Thyroid gland (tissue), 4 donors: ENCODE measurements at regions of chr17 and their contacts with region 1.

Region 1: GRCh38 chr17:47229535-47230443 is 20.6 kb downstream of the MYL4 start:
- DNase-seq: peak; percentile 94
- H3K4me3 ChIP-seq: no peak overlapping the region
- H3K27ac ChIP-seq: peak overlapping the region; percentile 84 to 97 (median 93)
- H3K4me1 ChIP-seq: peaks cover 40 to 54% of the 10 kb centered on the region in 2 donors
- H3K27me3 ChIP-seq: no peaks in the 10 kb centered on the region
- CTCF ChIP-seq: peak; percentile 95 to 99 (median 99)
- POLR2A ChIP-seq: peak in 1 of 2 donors; percentile 63

Region 2: DNA sequence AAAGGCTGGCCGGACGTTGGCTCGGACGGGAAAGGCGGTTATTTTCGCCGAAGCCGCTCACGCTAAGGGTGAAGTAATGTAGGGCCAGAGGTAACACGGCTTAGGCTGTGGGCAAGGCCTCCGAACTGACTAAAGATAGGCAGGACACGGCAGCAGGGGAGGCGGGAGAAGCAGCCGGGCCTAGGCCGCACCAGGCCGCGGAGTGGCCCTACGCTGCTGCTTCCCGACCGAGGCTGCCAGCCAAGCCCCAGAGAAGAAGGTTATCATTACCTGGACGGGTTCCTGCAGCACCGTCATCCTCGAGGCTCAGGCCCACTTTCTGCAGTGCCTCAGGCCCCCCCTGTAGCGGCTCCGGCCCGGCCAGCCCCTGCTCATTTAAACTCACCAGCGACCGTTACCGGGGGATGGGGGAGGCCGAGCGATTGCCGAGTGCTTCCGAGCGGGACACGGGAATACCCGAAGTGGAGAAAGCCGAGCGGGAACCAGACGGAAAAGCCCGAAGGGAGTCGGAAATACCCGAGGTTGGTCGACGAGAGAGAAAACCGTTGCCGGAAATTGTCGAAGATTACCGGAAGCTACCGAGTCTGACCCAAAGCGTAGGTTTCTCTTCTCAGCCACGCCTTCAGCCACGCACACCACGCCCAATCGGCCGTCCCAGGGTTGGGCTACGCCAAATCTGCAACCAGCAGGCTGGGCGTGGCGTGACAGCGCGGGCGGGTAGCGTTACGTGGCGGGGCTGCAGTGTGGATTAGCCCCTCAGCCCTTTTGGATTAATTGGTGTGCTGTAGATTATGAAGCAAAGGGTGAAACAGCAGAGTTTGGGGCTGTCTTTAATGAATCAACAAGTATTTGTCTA is 40.7 kb before region 1 on chr17 and contains the start of gene CDC27:
- intact Hi-C with region 1: no loop called
- DNase-seq: peak; percentile 99
- H3K4me3 ChIP-seq: peak within 1 kb of the TSS; percentile 50 to 89 (median 72)
- H3K27ac ChIP-seq: peak within 1 kb of the TSS; percentile 94 to 98 (median 96)
- H3K4me1 ChIP-seq: peaks cover 33 to 38% of the 10 kb centered on the region in 2 donors
- H3K27me3 ChIP-seq: no peaks in the 10 kb centered on the region
- CTCF ChIP-seq: no peak
- POLR2A ChIP-seq: peak; percentile 75 to 88
- total RNA-seq, gene CDC27: 124 to 195 (median 181) TPM

Region 3: DNA sequence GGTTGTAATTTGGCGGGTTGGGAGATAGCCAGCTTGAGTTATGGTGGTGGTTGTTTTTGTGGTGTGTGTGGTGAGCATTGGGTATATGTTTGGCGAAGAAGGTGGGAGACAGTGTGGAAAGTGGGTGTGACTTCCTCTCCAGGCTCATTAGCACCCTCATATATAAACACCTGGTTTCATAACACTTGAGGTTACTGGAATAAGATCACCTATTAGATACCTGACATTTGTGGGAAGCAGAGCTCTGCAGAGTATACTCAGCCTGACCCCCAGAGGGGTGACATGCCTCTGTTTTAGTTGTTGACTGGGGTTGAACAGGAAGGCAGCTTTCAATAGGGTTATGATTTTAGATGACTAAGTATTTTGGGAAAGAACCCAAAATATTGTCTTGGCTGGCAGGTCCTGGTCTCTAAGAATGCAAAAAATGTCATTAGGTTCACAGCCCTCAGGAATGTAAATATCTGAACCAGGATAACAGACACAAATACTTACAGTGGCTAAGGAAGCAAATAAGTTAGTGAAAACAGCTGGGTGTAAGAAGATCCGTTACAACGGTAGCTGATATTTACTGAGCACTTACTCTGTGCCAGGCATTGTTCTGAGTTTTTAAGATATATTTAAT is 75.6 kb after region 1 on chr17:
- intact Hi-C with region 1: no loop called
- DNase-seq: peak in 1 of 2 donors; percentile 47
- H3K4me3 ChIP-seq: no peak overlapping the region
- H3K27ac ChIP-seq: peak overlapping the region; percentile 78 to 93 (median 85)
- H3K4me1 ChIP-seq: peaks cover 14 to 31% of the 10 kb centered on the region in 2 donors
- H3K27me3 ChIP-seq: no peaks in the 10 kb centered on the region
- CTCF ChIP-seq: no peak
- POLR2A ChIP-seq: no peak

Region 4: DNA sequence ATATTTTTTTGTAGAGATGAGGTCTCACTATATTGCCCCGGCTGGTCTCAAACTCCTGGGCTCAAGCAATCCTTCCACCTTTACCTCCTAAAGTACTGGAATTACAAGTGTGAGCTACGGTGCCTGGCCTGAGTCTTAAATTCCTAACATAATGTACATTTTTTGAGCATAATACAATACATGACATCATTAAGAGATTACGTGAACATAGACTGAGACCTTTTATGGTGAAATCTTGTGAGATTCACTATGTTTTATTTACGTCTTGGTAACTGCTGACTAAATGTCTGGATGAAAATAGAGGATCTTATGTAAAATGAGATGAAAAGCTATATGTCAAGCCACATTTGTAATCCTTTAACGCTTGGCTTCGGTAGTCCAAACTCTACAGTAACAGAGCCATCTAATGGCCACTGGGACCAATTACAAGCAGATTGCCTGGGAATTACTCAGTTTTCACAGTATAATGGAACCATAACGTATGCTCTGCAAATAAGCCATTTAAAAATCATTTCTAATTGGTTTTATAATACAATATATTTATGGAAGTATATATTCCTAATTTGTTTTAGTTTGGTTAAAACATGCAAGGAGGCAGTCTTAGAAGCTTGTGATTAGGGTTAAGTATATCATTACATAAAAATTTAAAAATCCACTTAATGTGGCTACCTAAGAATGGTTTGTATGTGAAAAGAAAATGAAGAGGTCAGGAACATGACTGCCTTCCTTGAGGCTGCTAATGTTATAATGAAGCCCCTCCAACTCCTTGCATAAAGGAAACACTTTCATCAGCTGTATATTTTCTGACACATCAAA is 85.9 kb after region 1 on chr17:
- intact Hi-C with region 1: loop called (anchors 5 kb)
- DNase-seq: peak in 1 of 2 donors; percentile 32
- H3K4me3 ChIP-seq: no peak overlapping the region
- H3K27ac ChIP-seq: peak overlapping the region in 2 of 3 donors; percentile 20 to 28
- H3K4me1 ChIP-seq: peaks cover 0 to 3% of the 10 kb centered on the region in 2 donors
- H3K27me3 ChIP-seq: no peaks in the 10 kb centered on the region
- CTCF ChIP-seq: peak; percentile 37 to 89 (median 76)
- POLR2A ChIP-seq: no peak

Region 5: GRCh38 chr17:47621293-47622178 is 391.7 kb after region 1 on chr17:
- intact Hi-C with region 1: loop called (anchors 10 kb)
- DNase-seq: peak; percentile 56 to 70
- H3K4me3 ChIP-seq: no peak overlapping the region
- H3K27ac ChIP-seq: peak overlapping the region; percentile 68 to 71 (median 69)
- H3K4me1 ChIP-seq: peaks cover 21 to 35% of the 10 kb centered on the region in 2 donors
- H3K27me3 ChIP-seq: no peaks in the 10 kb centered on the region
- CTCF ChIP-seq: no peak
- POLR2A ChIP-seq: no peak